Posterior cingulate gyrus (tissue), 11 donors: ENCODE measurements at regions of chr2 and their contacts with region 1.

Region 1: GRCh38 chr2:11477994-11478393 is 12.0 kb upstream of the E2F6 start:
- DNase-seq: peak; percentile 83 to 98 (median 96)

Region 2: DNA sequence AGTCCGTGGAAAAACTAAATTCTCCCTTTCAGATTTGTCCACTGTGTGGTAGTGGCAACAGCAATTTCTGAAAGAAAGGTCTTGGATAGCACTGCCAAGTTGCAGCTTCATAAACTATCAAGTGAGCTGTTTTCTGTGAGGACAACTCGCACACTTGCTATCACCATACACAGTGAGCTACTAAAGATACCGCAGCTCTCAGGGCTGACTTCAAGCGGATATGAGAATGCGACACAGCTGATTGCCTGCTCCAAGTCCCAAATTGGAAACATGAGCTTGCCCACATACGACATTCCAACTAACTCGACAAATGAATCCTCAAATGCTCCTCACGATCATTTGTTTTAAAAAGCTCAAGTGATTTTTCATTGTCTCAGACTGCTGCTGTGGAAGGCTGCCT is 58.2 kb before region 1 on chr2:
- intact Hi-C with region 1: no loop called
- DNase-seq: peak in 3 of 10 donors; percentile 32 to 84 (median 40)

Region 3: GRCh38 chr2:11508279-11508678 is 30.3 kb after region 1 on chr2:
- intact Hi-C with region 1: no loop called
- DNase-seq: peak in 9 of 10 donors; percentile 22 to 87 (median 36)

Region 4: GRCh38 chr2:11583840-11584524 is 106.0 kb after region 1 on chr2:
- intact Hi-C with region 1: loop called (anchors 1 kb)
- DNase-seq: peak; percentile 75 to 98 (median 84)